AG04450 (cell line): ENCODE measurements at regions of chr12 and their contacts with region 1.

Region 1: GRCh38 chr12:51886021-51886322 is 1.9 kb upstream of the ANKRD33 start:
- DNase-seq: peak; percentile 81
- H3K4me3 ChIP-seq: 0 out of 2 replicates have a peak overlapping the region, but pooled peaks have one; percentile 13
- H3K27ac ChIP-seq: peak overlapping the region; percentile 65
- H3K27me3 ChIP-seq: no peaks in the 10 kb centered on the region
- CTCF ChIP-seq: no peak

Region 2: DNA sequence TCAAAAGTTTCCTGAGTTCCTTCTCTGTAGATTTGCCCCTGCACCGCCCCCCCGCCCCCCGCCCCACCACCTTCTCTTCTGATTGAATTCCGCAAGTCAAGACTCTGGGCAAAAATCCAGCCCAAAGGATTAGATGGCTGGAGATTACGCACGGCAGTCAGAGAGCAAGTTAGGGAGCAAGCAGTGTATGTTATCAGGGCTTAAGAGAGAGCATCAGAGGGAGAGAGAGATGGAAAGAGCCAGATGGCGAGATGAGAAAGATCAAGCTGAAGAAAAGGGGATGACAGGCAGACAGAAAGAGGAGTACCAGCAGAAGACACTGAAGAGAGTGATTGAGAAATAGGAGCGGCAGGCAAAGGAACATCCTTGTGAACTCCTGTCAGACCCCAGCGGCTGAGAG is 12.0 kb before region 1 on chr12:
- CTCF ChIA-PET with region 1: interaction called, 16 read pairs
- POLR2A ChIA-PET with region 1: no interaction called
- DNase-seq: no peak
- H3K4me3 ChIP-seq: no peak overlapping the region
- H3K27ac ChIP-seq: no peak overlapping the region
- H3K27me3 ChIP-seq: peaks cover 3% of the 10 kb centered on the region
- CTCF ChIP-seq: no peak